ENCODE measurements at regions of chr1 and their contacts with region 1.

Region 1: DNA sequence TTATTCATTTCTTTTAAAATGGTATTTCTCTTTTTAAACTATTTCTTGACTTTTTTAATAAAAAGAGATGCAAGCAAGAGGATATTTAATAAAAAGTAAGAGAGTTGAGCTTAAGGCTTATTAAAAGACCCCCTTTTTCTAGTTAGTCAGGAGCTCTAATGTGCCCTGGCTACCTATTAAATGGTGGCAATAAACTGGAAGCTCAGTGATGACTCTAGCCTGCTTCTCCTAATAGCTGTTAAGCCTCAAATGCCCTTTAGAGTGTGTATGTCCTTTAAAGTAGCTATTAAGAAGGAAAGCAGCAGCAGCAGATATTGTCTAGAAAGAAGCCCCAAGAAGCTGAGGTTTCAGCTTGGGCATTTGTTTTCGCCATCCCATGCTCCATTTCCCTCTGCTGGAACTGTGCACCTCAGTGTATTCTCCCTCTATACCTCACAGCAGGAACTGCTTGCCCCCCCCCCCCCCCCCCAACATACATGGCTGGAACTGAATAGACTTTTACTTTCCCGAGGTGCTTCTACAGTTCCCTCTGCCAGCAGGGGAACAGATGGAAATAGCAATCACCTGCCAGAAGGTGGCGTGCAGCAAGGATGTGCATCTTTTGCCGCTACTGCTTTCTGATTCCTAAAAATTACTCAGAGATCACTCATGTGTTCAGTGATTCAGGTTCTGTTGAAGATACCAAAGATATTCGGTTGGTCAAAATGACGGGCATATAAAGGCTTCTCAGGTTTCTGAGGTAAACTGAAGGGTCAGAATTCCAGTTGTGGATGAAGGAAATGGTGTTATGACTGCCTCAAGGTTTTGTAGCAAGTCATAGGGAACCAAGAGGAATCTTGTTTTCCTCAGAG is 2.5 kb downstream of the RGS4 start:
- DNase-seq: peak in 1 of 2 donors; percentile 6
- ATAC-seq: peak in 1 of 2 donors; percentile 39
- H3K4me3 ChIP-seq: no peak overlapping the region
- H3K27ac ChIP-seq: no peak overlapping the region
- H3K4me1 ChIP-seq: no peaks in the 10 kb centered on the region
- H3K27me3 ChIP-seq: peaks cover 0 to 4% (median 0%) of the 10 kb centered on the region in 3 donors
- CTCF ChIP-seq: peak in 3 of 5 experiments; percentile 28 to 63 (median 54)
- POLR2A ChIP-seq: no peak

Region 2: GRCh38 chr1:162412002-162412401 is 659.6 kb before region 1 on chr1 and contains the start of gene SH2D1B:
- in situ Hi-C with region 1: no loop called
- intact Hi-C with region 1: no loop called
- DNase-seq: no peak
- ATAC-seq: no peak
- H3K4me3 ChIP-seq: no peak within 1 kb of the TSS
- H3K27ac ChIP-seq: no peak within 1 kb of the TSS
- H3K4me1 ChIP-seq: no peaks in the 10 kb centered on the region
- H3K27me3 ChIP-seq: no peaks in the 10 kb centered on the region
- CTCF ChIP-seq: no peak
- POLR2A ChIP-seq: no peak
- total RNA-seq, gene SH2D1B: 2.1 to 34.2 (median 4.1) TPM

Region 3: GRCh38 chr1:162878000-162878596 is 193.5 kb before region 1 on chr1:
- in situ Hi-C with region 1: loop called in 2 of 4 experiments (anchors 10 to 25 kb)
- intact Hi-C with region 1: loop called (anchors 2 kb)
- DNase-seq: peak in 1 of 2 donors; percentile 43
- ATAC-seq: peak; percentile 72 to 80
- H3K4me3 ChIP-seq: no peak overlapping the region
- H3K27ac ChIP-seq: no peak overlapping the region
- H3K4me1 ChIP-seq: peaks cover 0 to 9% of the 10 kb centered on the region in 2 donors
- H3K27me3 ChIP-seq: no peaks in the 10 kb centered on the region
- CTCF ChIP-seq: peak; percentile 56 to 80 (median 73)
- POLR2A ChIP-seq: no peak

Region 4: GRCh38 chr1:163029901-163030300 is 41.7 kb before region 1 on chr1:
- in situ Hi-C with region 1: no loop called
- intact Hi-C with region 1: no loop called
- DNase-seq: no peak
- ATAC-seq: no peak
- H3K4me3 ChIP-seq: no peak overlapping the region
- H3K27ac ChIP-seq: no peak overlapping the region
- H3K4me1 ChIP-seq: no peaks in the 10 kb centered on the region
- H3K27me3 ChIP-seq: no peaks in the 10 kb centered on the region
- CTCF ChIP-seq: no peak
- POLR2A ChIP-seq: no peak